HepG2 (cell line): ENCODE measurements at regions of chr3 and their contacts with region 1.

Region 1: DNA sequence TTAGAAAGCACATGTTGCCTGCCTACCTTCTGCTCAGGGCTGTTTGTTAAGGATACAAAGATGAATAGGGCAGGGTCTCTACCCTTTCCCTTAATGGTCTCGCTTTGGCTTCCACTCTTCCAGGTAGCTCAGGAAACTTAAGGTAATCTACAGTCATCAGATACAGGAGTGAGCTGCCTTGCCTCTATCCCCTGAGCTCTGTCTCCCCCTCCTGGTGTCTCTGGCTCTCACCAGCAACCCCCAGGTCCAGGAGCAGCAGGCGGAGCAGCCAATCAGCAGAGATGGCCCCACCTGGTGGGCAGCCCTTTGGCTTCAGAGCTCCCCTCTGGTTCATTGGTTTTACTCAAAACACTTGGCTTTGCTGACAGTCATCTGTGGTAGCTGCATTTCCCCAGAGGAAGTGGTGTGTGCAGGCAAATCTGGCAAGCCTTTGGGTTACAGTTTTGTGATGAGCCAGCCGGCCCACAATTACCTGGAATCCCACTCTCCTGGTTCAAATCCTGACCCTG is 8.5 kb upstream of the CX3CR1 start:
- DNase-seq: peak; percentile 74
- ATAC-seq: peak; percentile 96
- H3K4me3 ChIP-seq: no peak overlapping the region
- H3K27ac ChIP-seq: no peak overlapping the region
- H3K4me1 ChIP-seq: peaks cover 43% of the 10 kb centered on the region
- H3K27me3 ChIP-seq: no peaks in the 10 kb centered on the region
- CTCF ChIP-seq: peak; percentile 97
- EP300 ChIP-seq: no peak
- POLR2A ChIP-seq: no peak
- RAD21 ChIP-seq: peak; percentile 95

Region 2: DNA sequence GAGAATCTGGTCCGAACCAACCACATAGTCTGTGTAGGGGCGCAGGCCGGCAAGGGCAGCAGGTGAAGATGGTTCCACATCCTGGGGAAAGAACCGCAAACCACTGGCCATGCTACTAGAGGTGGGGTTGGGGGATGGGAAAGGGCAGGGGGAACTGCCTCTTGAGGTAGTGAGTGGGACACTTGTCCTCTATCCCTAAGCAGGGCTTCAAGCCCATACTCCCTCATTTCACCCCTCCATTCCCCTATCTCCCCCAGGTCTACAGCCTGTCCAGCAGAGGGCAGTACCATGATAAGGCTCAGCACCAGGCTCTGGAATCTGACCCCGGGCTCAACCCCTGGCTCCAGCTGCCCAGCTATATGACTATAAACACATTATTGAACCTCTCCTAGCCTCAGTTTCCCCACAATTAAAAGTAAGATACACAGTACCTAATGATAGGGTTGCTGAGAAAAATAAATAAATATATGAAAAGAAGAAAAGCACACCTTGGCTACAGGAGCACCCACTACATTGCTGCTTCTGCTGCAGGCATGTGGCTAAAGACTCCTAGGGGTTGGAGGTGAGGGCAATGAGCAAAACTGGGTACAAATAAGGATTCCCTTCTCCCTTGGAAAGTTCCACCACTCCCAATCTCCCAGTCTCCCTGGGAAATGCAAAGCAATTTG is 187.2 kb before region 1 on chr3:
- CTCF ChIA-PET with region 1: interaction called, 13 read pairs
- POLR2A ChIA-PET with region 1: no interaction called
- in situ Hi-C with region 1: no loop called
- intact Hi-C with region 1: loop called (anchors 5 kb)
- DNase-seq: peak; percentile 29
- ATAC-seq: peak; percentile 70
- H3K4me3 ChIP-seq: no peak overlapping the region
- H3K27ac ChIP-seq: no peak overlapping the region
- H3K4me1 ChIP-seq: peaks cover 33% of the 10 kb centered on the region
- H3K27me3 ChIP-seq: no peaks in the 10 kb centered on the region
- CTCF ChIP-seq: peak; percentile 71
- EP300 ChIP-seq: no peak
- POLR2A ChIP-seq: no peak
- RAD21 ChIP-seq: no peak

Region 3: DNA sequence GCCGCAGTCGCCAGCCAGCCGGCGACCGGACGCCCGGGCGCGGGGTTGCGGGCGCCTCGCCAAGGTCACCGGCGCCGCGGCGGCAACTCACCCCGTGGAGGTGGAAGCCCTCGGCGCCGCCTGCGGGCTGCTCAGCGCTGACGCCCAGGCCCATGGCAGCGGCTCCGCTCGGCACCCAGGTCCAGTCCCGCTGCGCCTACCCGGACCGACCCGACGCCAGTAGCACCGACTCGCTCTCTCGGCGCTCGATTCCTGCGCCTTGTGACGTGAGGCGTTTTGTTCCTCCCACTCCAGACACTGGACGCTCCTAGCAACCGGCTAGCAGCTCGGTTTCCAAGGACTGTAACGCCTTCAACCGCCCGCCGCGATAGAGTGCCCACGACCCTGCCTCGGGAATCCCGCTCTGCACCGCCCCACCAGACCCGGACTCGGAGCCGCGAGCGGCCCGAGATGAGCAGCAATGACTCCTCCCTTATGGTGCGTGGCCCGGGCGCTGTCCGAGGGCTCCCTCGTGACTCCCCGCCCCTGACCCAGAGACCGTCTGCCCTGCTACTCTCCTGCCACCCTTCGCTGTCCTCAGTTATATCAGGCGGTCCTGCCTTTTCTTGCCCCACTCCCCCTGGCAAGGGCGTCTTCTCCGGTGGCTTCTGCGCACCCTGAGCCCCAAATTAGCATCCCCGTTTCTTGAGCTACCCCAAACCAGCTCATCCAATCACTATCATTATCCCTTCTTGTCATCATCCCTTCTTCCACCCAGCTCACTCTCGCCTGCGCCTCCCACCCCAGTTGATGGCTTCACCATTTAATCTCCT is 180.8 kb before region 1 on chr3 and contains the starts of genes GORASP1 and TTC21A:
- CTCF ChIA-PET with region 1: no interaction called
- POLR2A ChIA-PET with region 1: interaction called, 3 read pairs
- in situ Hi-C with region 1: no loop called
- intact Hi-C with region 1: loop called (anchors 5 kb)
- DNase-seq: peak; percentile 76
- ATAC-seq: peak; percentile 79
- H3K4me3 ChIP-seq: peak within 1 kb of the TSS; percentile 85 to 94 (median 87)
- H3K27ac ChIP-seq: peak within 1 kb of the TSS; percentile 72
- H3K4me1 ChIP-seq: peaks cover 38% of the 10 kb centered on the region
- H3K27me3 ChIP-seq: no peaks in the 10 kb centered on the region; a peak in 1 of 5 replicates
- CTCF ChIP-seq: no peak
- EP300 ChIP-seq: no peak
- POLR2A ChIP-seq: peak; percentile 72 to 75; a peak in 3 of 4 replicates
- RAD21 ChIP-seq: peak; percentile 53
- total RNA-seq, gene GORASP1: 27.0 and 36.4 TPM in 2 replicates
- total RNA-seq, gene TTC21A: 0.31 and 0.39 TPM in 2 replicates

Region 4: GRCh38 chr3:39126532-39127071 is 161.8 kb before region 1 on chr3:
- CTCF ChIA-PET with region 1: interaction called, 20 read pairs
- POLR2A ChIA-PET with region 1: interaction called, 5 read pairs
- in situ Hi-C with region 1: loop called (anchors 5 kb)
- intact Hi-C with region 1: loop called (anchors 1 kb)
- DNase-seq: peak; percentile 56
- ATAC-seq: peak; percentile 90
- H3K4me3 ChIP-seq: no peak overlapping the region
- H3K27ac ChIP-seq: no peak overlapping the region
- H3K4me1 ChIP-seq: peaks cover 13% of the 10 kb centered on the region
- H3K27me3 ChIP-seq: no peaks in the 10 kb centered on the region
- CTCF ChIP-seq: peak; percentile 89
- EP300 ChIP-seq: no peak
- POLR2A ChIP-seq: no peak
- RAD21 ChIP-seq: peak; percentile 79

Region 5: DNA sequence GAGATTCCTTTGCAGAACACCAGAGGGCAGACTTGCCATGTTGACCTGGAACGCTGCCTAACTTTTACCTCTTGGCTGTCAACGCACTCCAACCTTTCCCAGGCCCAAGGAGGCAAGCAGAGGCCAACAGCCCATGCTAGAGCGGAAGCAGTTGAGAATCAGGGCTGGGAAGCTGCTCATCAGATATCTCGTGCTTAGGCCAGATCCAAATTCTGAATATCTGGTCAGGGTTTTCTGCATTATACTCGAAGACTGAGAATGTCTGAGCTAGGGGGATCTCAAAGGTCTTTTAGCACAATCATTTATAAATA is 98.4 kb before region 1 on chr3:
- CTCF ChIA-PET with region 1: interaction called, 30 read pairs
- POLR2A ChIA-PET with region 1: no interaction called
- in situ Hi-C with region 1: loop called (anchors 5 kb)
- intact Hi-C with region 1: loop called (anchors 1 kb)
- DNase-seq: peak; percentile 52
- ATAC-seq: peak; percentile 75
- H3K4me3 ChIP-seq: no peak overlapping the region
- H3K27ac ChIP-seq: no peak overlapping the region
- H3K4me1 ChIP-seq: no peaks in the 10 kb centered on the region
- H3K27me3 ChIP-seq: peaks cover 3 to 28% of the 10 kb centered on the region in 2 experiments; a peak in 4 of 5 replicates
- CTCF ChIP-seq: peak; percentile 89
- EP300 ChIP-seq: no peak
- POLR2A ChIP-seq: no peak
- RAD21 ChIP-seq: peak; percentile 78

Region 6: DNA sequence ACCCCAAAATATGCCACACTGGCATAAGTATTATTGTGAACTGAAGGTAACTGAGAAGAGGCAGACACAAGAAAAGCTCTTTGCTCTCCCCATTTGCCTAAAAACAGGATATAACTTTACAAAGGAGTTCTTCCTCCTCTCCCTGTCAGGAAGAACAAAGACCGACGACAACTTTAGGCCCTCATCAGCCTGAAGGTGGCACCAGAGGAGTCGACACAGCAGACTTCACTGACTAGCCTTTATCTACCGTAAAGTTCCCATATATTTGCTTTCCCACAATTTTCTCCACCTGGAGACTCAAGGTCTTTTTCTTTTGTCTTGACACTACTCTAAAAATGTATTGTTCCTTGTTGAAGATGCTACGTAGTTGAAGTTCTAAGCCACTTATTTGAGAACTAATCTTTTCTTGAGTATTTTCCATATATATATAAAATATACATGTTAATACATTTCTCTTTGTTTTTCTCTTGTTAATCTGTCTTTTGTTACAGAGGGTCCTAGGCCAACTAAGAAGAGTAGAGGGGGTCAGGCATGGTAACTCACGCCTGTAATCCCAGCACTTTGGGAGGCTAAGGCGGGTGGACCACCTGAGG is 79.8 kb before region 1 on chr3:
- CTCF ChIA-PET with region 1: interaction called, 16 read pairs
- POLR2A ChIA-PET with region 1: no interaction called
- in situ Hi-C with region 1: no loop called
- intact Hi-C with region 1: loop called (anchors 1 kb)
- DNase-seq: peak; percentile 21
- ATAC-seq: peak; percentile 90
- H3K4me3 ChIP-seq: no peak overlapping the region
- H3K27ac ChIP-seq: no peak overlapping the region
- H3K4me1 ChIP-seq: no peaks in the 10 kb centered on the region
- H3K27me3 ChIP-seq: peaks cover 1 to 19% of the 10 kb centered on the region in 2 experiments; a peak in 4 of 5 replicates
- CTCF ChIP-seq: peak; percentile 68
- EP300 ChIP-seq: no peak
- POLR2A ChIP-seq: no peak
- RAD21 ChIP-seq: no peak

Region 7: GRCh38 chr3:39378088-39378487 is 89.7 kb after region 1 on chr3:
- CTCF ChIA-PET with region 1: no interaction called
- POLR2A ChIA-PET with region 1: no interaction called
- in situ Hi-C with region 1: no loop called
- intact Hi-C with region 1: loop called (anchors 1 kb)
- DNase-seq: peak; percentile 59
- ATAC-seq: peak; percentile 88
- H3K4me3 ChIP-seq: no peak overlapping the region
- H3K27ac ChIP-seq: no peak overlapping the region
- H3K4me1 ChIP-seq: peaks cover 22% of the 10 kb centered on the region
- H3K27me3 ChIP-seq: 0 out of 5 replicates have a peak, but pooled peaks cover 0 to 1% of the 10 kb centered on the region in 2 experiments
- CTCF ChIP-seq: peak; percentile 87
- EP300 ChIP-seq: no peak
- POLR2A ChIP-seq: no peak
- RAD21 ChIP-seq: peak; percentile 73

Region 8: GRCh38 chr3:40044487-40044886 is 756.1 kb after region 1 on chr3:
- CTCF ChIA-PET with region 1: no interaction called
- POLR2A ChIA-PET with region 1: no interaction called
- in situ Hi-C with region 1: no loop called
- intact Hi-C with region 1: no loop called
- DNase-seq: no peak
- ATAC-seq: no peak
- H3K4me3 ChIP-seq: no peak overlapping the region
- H3K27ac ChIP-seq: no peak overlapping the region
- H3K4me1 ChIP-seq: no peaks in the 10 kb centered on the region
- H3K27me3 ChIP-seq: no peaks in the 10 kb centered on the region; a peak in 1 of 5 replicates
- CTCF ChIP-seq: no peak
- EP300 ChIP-seq: no peak
- POLR2A ChIP-seq: no peak
- RAD21 ChIP-seq: no peak